BJ (cell line): ENCODE measurements at regions of chr14 and their contacts with region 1.

Region 1: DNA sequence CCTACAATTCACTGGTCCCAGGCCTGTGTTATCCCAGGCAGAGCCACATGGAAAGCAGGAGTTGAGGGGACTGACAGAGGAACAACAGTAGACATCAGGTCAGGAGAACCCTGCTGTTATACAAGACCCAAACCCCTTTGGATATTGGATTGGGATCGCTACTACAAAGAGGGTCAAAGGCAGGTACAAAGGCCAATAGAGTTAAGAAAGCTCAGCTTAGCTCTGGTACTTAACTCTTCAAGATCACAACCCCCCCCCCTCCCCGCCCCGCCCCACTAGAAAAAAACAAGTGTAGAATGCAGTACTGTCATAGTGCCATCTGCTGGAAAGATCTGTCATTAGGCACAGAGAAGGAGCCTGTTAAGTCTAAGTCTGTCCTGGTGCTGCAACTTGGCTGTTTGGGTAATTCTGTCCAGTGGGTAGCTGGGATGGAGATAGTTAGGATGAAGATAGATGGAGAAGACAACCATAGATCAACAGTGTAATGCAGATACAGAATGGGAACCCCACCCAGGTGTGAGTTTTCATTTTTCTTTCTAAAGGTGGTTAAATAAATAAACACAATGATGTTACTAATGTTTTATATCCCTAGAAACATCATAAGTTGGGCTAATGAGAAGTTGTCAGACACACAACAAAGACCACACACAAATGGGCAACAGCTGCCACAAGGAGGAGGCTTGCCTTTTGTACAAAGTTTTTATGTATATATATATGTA is 17.2 kb downstream of the REM2 start:
- DNase-seq: no peak
- H3K4me3 ChIP-seq: no peak overlapping the region
- H3K27me3 ChIP-seq: no peaks in the 10 kb centered on the region
- CTCF ChIP-seq: peak; percentile 73

Region 2: GRCh38 chr14:22472935-22473854 is 427.0 kb before region 1 on chr14:
- CTCF ChIA-PET with region 1: no interaction called
- POLR2A ChIA-PET with region 1: no interaction called
- DNase-seq: no peak
- H3K4me3 ChIP-seq: no peak overlapping the region
- H3K27me3 ChIP-seq: peaks cover 1% of the 10 kb centered on the region
- CTCF ChIP-seq: peak; percentile 31

Region 3: DNA sequence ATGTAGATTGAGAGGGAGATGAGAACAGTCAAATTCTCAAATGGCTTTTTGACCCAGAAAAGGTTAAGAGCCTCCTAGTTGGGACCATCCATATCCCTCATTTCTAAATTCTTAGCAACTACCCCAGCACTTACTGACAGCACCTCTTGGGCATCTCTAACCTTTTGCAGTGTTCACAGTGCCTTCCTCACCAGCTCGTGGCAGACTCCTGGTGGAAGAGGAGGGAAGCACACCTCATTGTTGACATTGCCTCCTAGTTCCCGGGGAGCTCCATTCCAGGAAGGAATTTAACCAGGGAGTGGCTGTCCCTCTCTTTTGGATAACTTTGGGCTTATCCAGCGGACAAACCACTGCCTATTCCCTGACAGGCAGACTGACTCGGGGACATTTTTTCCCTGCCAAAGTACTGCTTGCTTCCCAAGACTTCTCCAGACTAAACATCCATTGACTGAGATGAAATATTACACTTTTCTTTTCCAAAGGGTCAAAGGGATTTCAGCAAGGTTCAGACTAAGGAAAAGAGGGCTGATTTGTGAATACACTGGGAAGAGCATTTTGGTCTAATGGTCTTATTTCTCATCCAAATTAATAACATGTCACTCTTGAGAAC is 247.1 kb before region 1 on chr14:
- CTCF ChIA-PET with region 1: no interaction called
- POLR2A ChIA-PET with region 1: no interaction called
- DNase-seq: peak; percentile 26
- H3K4me3 ChIP-seq: no peak overlapping the region
- H3K27me3 ChIP-seq: no peaks in the 10 kb centered on the region
- CTCF ChIP-seq: peak; percentile 97

Region 4: DNA sequence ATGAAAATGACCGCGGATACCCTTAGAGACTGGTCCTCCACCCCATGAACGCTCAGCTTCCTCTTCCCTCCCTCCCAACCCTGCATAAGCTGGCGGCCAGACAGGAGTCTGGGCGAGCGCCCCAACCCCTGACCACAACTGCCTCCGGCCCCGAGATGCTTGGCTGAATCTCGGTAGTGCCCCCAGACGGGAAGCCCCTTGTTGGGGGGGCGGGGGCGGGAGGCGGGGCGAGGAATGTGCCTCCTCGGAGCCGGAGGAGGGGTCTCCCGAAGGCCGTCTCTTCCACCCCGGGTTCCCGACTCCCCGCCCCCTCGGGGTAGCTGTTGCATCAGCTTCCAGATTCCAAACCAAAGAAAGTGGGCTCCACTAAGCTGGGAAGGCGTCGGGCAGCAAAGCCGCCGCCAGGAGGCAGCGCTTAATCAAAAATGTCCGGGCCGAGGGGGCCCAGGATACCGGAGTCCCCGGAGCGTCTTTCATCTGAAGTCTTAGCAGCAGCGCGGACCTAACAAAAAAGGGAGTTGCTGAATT is 77.6 kb before region 1 on chr14:
- CTCF ChIA-PET with region 1: interaction called, 11 read pairs
- POLR2A ChIA-PET with region 1: no interaction called
- DNase-seq: peak; percentile 54
- H3K4me3 ChIP-seq: peak overlapping the region; percentile 28
- H3K27me3 ChIP-seq: no peaks in the 10 kb centered on the region
- CTCF ChIP-seq: peak; percentile 90

Region 5: DNA sequence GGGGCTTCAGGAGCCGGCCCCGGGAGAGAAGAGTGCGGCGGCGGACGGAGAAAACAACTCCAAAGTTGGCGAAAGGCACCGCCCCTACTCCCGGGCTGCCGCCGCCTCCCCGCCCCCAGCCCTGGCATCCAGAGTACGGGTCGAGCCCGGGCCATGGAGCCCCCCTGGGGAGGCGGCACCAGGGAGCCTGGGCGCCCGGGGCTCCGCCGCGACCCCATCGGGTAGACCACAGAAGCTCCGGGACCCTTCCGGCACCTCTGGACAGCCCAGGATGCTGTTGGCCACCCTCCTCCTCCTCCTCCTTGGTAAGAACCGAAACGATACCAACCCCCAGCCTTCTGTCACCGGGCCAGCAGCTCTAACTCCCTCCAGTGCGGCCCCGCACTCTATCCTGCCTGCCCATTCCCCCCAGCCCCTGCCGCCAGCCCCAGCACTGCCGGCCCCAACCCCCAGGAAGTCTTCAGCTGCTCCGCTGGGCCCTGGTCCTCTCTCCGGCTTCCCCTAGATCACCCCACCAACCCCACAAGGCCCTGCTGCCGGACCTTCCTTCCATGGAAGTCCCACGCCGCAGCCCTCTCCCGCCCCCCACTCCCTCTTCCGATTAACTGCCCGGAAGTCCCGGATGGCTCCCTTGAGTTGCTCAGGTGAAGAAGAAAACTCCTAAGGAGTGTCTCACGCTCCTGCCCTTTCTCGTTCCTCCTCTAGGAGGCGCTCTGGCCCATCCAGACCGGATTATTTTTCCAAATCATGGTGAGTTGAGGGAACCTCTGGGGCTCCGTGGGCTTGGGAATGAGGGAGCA is 28.0 kb before region 1 on chr14:
- CTCF ChIA-PET with region 1: interaction called, 95 read pairs
- POLR2A ChIA-PET with region 1: no interaction called
- DNase-seq: no peak
- H3K4me3 ChIP-seq: peak overlapping the region; percentile 97
- H3K27me3 ChIP-seq: no peaks in the 10 kb centered on the region
- CTCF ChIP-seq: peak; percentile 97

Region 6: GRCh38 chr14:22910916-22911315 is 10.7 kb after region 1 on chr14:
- CTCF ChIA-PET with region 1: interaction called, 21 read pairs
- POLR2A ChIA-PET with region 1: interaction called, 5 read pairs
- DNase-seq: no peak
- H3K4me3 ChIP-seq: no peak overlapping the region
- H3K27me3 ChIP-seq: no peaks in the 10 kb centered on the region
- CTCF ChIP-seq: no peak

Region 7: GRCh38 chr14:24215495-24216344 is 1315.5 kb after region 1 on chr14 and contains the start of gene MDP1:
- CTCF ChIA-PET with region 1: no interaction called
- POLR2A ChIA-PET with region 1: no interaction called
- DNase-seq: peak; percentile 38
- H3K4me3 ChIP-seq: peak within 1 kb of the TSS; percentile 64
- H3K27me3 ChIP-seq: no peaks in the 10 kb centered on the region
- CTCF ChIP-seq: peak; percentile 47
- polyA plus RNA-seq, gene MDP1: 16.3 and 19.3 TPM in 2 replicates